Adrenal gland (tissue), 19 donors: ENCODE measurements at regions of chr7 and their contacts with region 1.

Region 1: DNA sequence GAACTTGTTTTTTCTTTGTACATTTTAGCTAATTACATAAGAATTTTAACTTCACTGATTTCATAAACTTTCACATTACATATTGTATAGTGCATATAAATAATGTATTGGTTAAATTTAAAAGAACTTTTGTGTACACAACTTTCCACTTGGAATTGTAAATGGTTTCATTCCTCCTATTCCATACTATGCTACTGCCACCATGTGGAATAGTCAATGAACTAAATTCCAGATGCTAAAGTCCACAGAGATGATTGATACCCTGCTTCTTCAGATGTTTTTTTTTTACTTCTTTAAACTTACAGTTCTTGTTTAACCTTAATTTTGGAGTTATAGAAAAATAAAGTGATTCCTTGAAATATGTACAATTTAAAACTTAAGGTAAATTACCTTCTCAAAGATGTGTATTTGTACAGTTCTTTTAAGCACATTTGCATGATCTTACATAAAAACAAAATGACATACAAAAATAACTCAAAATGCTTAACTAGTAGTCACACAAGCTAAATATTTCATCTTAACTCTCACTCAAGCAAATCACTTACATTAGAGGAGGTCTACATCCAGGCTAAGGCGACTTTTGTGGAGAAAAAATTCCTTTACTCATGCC is 247.6 kb upstream of the HGF start:
- DNase-seq: no peak
- H3K4me3 ChIP-seq: no peak overlapping the region
- H3K27ac ChIP-seq: no peak overlapping the region
- H3K4me1 ChIP-seq: no peaks in the 10 kb centered on the region
- H3K27me3 ChIP-seq: no peaks in the 10 kb centered on the region
- CTCF ChIP-seq: peak; percentile 28 to 60 (median 44)
- POLR2A ChIP-seq: no peak

Region 2: GRCh38 chr7:81499262-81500116 is 518.0 kb before region 1 on chr7:
- intact Hi-C with region 1: loop called in 1 of 2 experiments (anchors 10 kb)
- DNase-seq: peak in 3 of 7 donors; percentile 26 to 41 (median 28)
- H3K4me3 ChIP-seq: no peak overlapping the region
- H3K27ac ChIP-seq: peak overlapping the region in 4 of 5 donors; percentile 10 to 53 (median 32)
- H3K4me1 ChIP-seq: peaks cover 6 to 19% of the 10 kb centered on the region in 2 donors
- H3K27me3 ChIP-seq: no peaks in the 10 kb centered on the region
- CTCF ChIP-seq: peak; percentile 38 to 90 (median 76)
- POLR2A ChIP-seq: no peak